Activated CD4-positive, alpha-beta memory T cell treated with anti-CD3 and anti-CD28 coated beads, Interleukin-2, amount 10 ng/mL, durations not matched to agents 7 days and 5 days (primary cell): ENCODE measurements at regions of chr14 and their contacts with region 1.

Region 1: DNA sequence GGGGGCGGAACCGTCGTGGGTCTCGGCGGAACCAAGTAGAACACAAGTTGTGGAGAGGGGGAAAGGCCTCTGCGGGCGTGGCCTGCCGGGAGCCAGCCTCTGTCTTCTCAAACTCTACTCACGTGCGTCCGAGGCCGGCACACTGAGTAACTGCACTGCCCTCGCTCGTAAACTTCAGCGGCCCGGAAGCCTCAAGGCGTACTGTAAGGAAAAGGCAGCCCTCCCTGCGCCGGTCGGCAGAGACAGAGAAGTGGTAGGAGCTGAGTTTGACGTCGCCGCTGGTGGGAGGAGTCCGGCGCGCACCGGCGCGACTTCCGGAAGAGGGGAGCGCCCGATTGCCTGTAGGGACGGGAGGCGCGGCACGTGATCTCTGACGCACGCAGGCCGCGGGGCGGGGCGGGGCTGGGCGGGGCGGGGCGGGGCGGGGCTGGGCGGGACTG is at the start of gene FBXO33:
- DNase-seq: peak; percentile 97
- H3K4me3 Mint-ChIP-seq: peak within 1 kb of the TSS; percentile 94
- H3K27ac Mint-ChIP-seq: peak within 1 kb of the TSS; percentile 99
- H3K4me1 Mint-ChIP-seq: peaks cover 38% of the 10 kb centered on the region
- H3K27me3 Mint-ChIP-seq: no peaks in the 10 kb centered on the region
- total RNA-seq, gene FBXO33: 23.1 to 24.8 TPM

Region 2: GRCh38 chr14:39102969-39103957 is 328.9 kb before region 1 on chr14 and contains the start of gene SEC23A:
- CTCF ChIA-PET with region 1: interaction called, 9 read pairs
- POLR2A ChIA-PET with region 1: interaction called, 49 read pairs
- DNase-seq: peak; percentile 88
- H3K4me3 Mint-ChIP-seq: peak within 1 kb of the TSS; percentile 97
- H3K27ac Mint-ChIP-seq: peak within 1 kb of the TSS; percentile 91
- H3K4me1 Mint-ChIP-seq: peaks cover 47% of the 10 kb centered on the region
- H3K27me3 Mint-ChIP-seq: no peaks in the 10 kb centered on the region
- total RNA-seq, gene SEC23A: 59.7 to 69.0 TPM

Region 3: DNA sequence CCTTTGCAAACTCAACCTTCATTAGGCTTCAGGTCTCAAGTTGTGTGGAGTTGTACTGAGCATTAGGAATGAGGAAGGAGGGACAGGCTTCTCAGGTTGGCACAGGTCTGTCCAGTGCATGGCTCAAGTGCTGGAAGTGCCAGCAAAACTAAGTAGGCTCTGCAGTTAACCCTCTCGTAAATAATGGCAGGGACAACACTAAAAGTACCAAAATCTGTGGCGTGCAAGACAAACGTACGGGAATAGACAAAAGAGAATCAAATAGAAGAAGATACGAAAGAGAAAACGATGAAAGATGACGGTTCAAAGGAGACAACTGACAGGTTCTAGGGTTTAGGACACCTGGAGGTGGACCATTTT is 262.7 kb before region 1 on chr14:
- CTCF ChIA-PET with region 1: interaction called, 8 read pairs
- POLR2A ChIA-PET with region 1: interaction called, 74 read pairs
- DNase-seq: no peak
- H3K4me3 Mint-ChIP-seq: peak overlapping the region; percentile 84
- H3K27ac Mint-ChIP-seq: peak overlapping the region; percentile 98
- H3K4me1 Mint-ChIP-seq: peaks cover 59% of the 10 kb centered on the region
- H3K27me3 Mint-ChIP-seq: no peaks in the 10 kb centered on the region

Region 4: GRCh38 chr14:39232554-39233415 is 199.4 kb before region 1 on chr14:
- CTCF ChIA-PET with region 1: interaction called, 48 read pairs
- POLR2A ChIA-PET with region 1: interaction called, 37 read pairs
- DNase-seq: peak; percentile 25
- H3K4me3 Mint-ChIP-seq: no peak overlapping the region
- H3K27ac Mint-ChIP-seq: peak overlapping the region; percentile 75
- H3K4me1 Mint-ChIP-seq: peaks cover 56% of the 10 kb centered on the region
- H3K27me3 Mint-ChIP-seq: no peaks in the 10 kb centered on the region

Region 5: DNA sequence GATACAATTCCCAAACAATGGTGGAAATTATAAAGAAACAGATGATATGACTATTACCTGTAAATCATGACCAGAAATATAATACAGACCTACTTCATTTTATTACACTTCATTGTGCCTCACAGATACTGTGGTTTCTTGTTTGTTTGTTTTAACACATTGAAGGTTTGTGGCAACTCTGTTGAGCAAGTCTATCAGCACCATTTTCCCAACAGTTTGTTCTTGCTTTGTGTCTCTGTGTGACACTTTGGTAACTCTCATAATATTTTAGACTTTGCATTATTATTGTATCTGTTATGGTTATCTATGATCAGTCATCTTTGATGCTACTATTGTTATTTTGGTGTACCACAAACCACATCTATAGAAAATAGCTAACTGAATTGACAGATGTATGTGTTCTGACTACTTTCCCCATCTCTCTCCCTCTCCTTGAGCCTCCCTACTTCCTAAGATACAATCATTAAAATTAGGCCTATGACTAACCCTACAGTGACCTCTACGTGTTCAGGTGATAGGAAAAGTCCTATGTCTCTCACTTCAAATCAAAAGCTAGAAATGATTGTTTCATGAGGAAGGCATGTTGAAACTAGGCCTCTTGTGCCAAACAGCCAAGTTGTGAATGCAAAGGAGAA is 49.1 kb before region 1 on chr14:
- CTCF ChIA-PET with region 1: no interaction called
- POLR2A ChIA-PET with region 1: interaction called, 18 read pairs
- DNase-seq: no peak
- H3K4me3 Mint-ChIP-seq: no peak overlapping the region
- H3K27ac Mint-ChIP-seq: no peak overlapping the region
- H3K4me1 Mint-ChIP-seq: peaks cover 17% of the 10 kb centered on the region
- H3K27me3 Mint-ChIP-seq: no peaks in the 10 kb centered on the region

Region 6: DNA sequence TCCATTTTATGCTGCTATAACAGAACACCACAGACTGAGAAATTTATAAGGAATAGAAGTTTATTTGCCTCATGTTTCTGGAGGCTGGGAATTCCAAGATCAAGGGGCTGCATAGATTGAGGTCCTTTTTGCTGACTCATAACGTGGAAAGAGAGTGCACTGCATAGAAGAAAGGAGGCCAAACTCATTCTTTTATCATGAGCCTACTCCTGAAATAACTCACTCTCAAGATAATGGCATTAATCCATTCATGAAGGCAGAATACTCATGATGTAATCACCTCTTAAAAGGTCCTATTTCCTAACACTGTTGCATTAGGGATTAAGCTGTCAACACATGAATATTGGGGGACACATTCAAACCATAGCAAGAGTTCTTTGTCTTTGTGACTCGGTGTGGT is 60.1 kb after region 1 on chr14:
- CTCF ChIA-PET with region 1: no interaction called
- POLR2A ChIA-PET with region 1: no interaction called
- DNase-seq: no peak
- H3K4me3 Mint-ChIP-seq: no peak overlapping the region
- H3K27ac Mint-ChIP-seq: no peak overlapping the region
- H3K4me1 Mint-ChIP-seq: no peaks in the 10 kb centered on the region
- H3K27me3 Mint-ChIP-seq: no peaks in the 10 kb centered on the region